ENCODE measurements at regions of chr6 and their contacts with region 1.

Region 1: DNA sequence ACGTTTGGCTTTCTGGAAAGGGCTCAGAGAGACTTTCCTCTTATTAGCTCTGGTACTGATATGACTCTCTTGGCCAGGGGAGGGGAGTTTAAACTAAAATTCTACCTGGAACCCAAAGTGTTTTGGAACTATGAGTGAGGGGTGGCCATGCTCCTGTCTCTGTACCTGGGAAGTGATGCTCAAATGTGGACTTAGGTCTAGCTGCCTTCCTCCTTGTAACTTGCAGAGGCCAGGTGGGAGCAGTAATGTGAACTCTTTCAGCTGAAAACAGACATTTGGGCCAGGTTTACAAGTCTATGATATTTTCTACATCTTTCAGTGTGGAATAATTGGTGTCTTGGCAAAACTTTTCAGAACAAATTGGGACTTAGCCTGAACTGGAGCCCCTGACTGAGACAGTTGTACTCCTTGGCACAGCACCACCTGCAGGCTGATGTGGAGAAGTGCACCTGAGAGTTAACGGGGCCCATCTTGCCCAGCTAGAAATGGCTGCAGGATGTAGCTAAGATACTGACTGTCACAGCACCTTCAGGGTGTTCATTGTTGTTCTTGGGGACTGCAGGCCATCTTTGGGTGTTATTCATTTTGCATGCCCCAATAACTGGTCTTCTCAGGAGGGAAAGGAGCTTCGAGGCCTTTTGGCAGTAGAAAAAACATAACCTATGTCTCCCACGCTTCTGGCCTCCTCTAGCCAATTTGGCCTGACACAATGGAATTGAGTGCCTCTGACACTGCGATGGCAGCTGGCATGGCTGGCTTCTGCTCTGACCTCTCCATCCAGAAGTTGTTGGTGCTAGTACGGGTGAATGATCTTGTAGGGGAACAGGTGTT is 37.1 kb downstream of the CD109 start:
- ATAC-seq: peak in 6 of 8 experiments; percentile 43 to 87 (median 78)
- H3K4me3 ChIP-seq: no peak overlapping the region
- H3K27ac ChIP-seq: no peak overlapping the region
- H3K4me1 ChIP-seq: no peaks in the 10 kb centered on the region

Region 2: GRCh38 chr6:73299151-73299971 is 433.7 kb before region 1 on chr6:
- in situ Hi-C with region 1: no loop called
- ATAC-seq: peak in 6 of 8 experiments; percentile 32 to 89 (median 85)
- H3K4me3 ChIP-seq: peak overlapping the region in 1 of 5 donors; percentile 11
- H3K27ac ChIP-seq: no peak overlapping the region
- H3K4me1 ChIP-seq: no peaks in the 10 kb centered on the region

Region 3: GRCh38 chr6:73675466-73676098 is 57.5 kb before region 1 on chr6:
- in situ Hi-C with region 1: loop called in 2 of 9 experiments (anchors 10 kb)
- ATAC-seq: peak; percentile 66 to 98 (median 86)
- H3K4me3 ChIP-seq: no peak overlapping the region
- H3K27ac ChIP-seq: no peak overlapping the region
- H3K4me1 ChIP-seq: no peaks in the 10 kb centered on the region

Region 4: GRCh38 chr6:73969971-73970970 is 237.2 kb after region 1 on chr6:
- in situ Hi-C with region 1: loop called in 1 of 9 experiments (anchors 25 kb)
- ATAC-seq: peak in 5 of 8 experiments; percentile 51 to 70 (median 62)
- H3K4me3 ChIP-seq: no peak overlapping the region
- H3K27ac ChIP-seq: no peak overlapping the region
- H3K4me1 ChIP-seq: peaks cover 0 to 8% of the 10 kb centered on the region in 2 donors

Measured in motor neuron (in vitro differentiated cells).